ENCODE measurements at regions of chr4 and their contacts with region 1.

Region 1: GRCh38 chr4:18689308-18690115 is 668.0 kb upstream of the LCORL start:
- DNase-seq: peak; percentile 63
- H3K4me3 Mint-ChIP-seq: no peak overlapping the region
- H3K27ac Mint-ChIP-seq: no peak overlapping the region
- H3K4me1 Mint-ChIP-seq: no peaks in the 10 kb centered on the region
- H3K27me3 Mint-ChIP-seq: peaks cover 20% of the 10 kb centered on the region

Region 2: GRCh38 chr4:19224820-19225219 is 535.3 kb after region 1 on chr4:
- CTCF ChIA-PET with region 1: no interaction called
- intact Hi-C with region 1: loop called (anchors 5 kb)
- DNase-seq: no peak
- H3K4me3 Mint-ChIP-seq: no peak overlapping the region
- H3K27ac Mint-ChIP-seq: no peak overlapping the region
- H3K4me1 Mint-ChIP-seq: no peaks in the 10 kb centered on the region
- H3K27me3 Mint-ChIP-seq: no peaks in the 10 kb centered on the region

Region 3: DNA sequence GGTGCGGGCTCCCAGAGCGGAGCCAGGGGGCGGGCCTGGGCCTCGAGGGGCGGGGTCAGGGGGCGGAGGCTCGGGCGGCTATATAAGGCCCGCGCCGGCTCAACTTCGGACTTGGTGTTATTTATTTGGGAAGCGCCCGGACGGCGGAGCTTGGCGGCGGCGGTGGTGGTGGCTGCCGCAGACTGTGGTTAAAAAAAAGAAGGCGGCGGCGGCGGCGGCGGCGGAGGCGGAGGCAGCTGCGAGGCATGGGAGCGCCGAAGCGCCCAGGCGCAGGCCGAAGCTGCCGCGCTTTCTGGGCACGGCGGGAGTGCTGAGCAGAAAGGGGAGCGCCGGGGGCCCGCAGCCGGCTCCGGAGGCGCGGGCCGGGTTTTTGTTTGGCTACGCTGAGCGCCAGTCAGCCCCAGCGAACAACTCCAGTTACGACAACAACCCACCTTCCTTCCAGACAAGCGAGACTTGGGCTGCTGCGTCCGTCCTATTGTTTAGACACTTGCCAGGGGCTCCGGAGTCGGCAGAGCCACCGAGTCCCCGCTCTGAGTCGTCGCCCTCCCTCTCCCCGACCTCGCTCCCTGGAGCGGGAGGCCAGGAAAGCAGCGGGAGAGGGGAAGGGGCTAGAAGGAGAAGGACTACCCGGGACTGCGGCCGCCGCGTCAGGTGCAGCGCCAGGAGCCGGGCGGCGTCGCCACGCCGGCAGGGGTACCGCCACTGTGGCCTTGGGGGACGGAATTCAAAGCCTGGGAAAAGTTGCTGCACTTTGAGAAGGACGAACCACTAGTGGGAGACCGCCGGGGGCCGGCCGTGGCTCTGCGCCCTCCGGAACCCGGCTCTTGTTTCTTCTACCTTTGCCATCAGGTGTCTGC is 1562.5 kb after region 1 on chr4 and contains the start of gene SLIT2:
- CTCF ChIA-PET with region 1: no interaction called
- intact Hi-C with region 1: loop called (anchors 1 kb)
- DNase-seq: peak; percentile 4
- H3K4me3 Mint-ChIP-seq: peak within 1 kb of the TSS; percentile 34
- H3K27ac Mint-ChIP-seq: no peak within 1 kb of the TSS
- H3K4me1 Mint-ChIP-seq: peaks cover 13% of the 10 kb centered on the region
- H3K27me3 Mint-ChIP-seq: peaks cover 46% of the 10 kb centered on the region
- total RNA-seq, gene SLIT2: not detected

Region 4: DNA sequence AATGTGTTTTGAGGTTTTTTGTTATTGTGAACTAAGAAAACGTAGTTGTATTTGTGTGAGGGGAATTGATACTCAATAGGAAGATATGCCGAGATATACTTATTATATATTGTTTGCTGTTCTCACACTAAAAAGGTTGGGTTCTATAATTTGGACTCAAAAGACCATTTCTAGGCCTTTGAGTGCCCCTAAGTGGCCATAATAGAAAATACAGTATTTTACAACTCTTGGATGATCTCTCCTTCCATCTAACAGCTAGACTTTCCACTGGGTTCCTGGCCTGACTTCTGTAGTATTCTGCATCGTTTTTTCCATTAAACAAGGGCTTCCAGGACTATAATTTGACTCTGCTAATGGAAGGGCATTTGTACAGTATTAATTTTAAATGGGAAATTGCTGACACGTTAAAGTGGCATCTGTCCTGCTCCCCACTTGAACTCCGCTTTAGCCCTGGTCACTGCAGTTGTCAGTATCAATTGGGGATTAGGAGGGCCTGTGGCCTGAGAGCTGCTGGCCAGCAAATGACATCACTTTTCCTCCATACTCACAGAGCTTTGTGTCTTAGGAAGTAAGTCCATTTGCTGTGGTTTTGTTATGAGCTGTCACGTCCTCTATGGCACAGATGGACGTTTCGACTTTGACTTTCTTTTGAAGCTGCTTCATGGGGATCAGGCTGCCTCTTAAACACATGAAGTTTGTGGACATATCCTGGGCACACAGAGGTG is 1739.1 kb after region 1 on chr4:
- CTCF ChIA-PET with region 1: no interaction called
- intact Hi-C with region 1: loop called (anchors 1 kb)
- DNase-seq: no peak
- H3K4me3 Mint-ChIP-seq: no peak overlapping the region
- H3K27ac Mint-ChIP-seq: no peak overlapping the region
- H3K4me1 Mint-ChIP-seq: no peaks in the 10 kb centered on the region
- H3K27me3 Mint-ChIP-seq: peaks cover 5% of the 10 kb centered on the region

Region 5: GRCh38 chr4:20544645-20545044 is 1855.1 kb after region 1 on chr4:
- CTCF ChIA-PET with region 1: no interaction called
- intact Hi-C with region 1: loop called (anchors 5 kb)
- DNase-seq: no peak
- H3K4me3 Mint-ChIP-seq: no peak overlapping the region
- H3K27ac Mint-ChIP-seq: no peak overlapping the region
- H3K4me1 Mint-ChIP-seq: no peaks in the 10 kb centered on the region
- H3K27me3 Mint-ChIP-seq: no peaks in the 10 kb centered on the region

Measured in activated naive CD4-positive, alpha-beta T cell treated with anti-CD3 and anti-CD28 coated beads for 36 hours (primary cell).